A673 (cell line): ENCODE measurements at regions of chr1 and their contacts with region 1.

Region 1: GRCh38 chr1:182789138-182790076 is at the start of gene NPL:
- DNase-seq: peak; percentile 85
- H3K4me3 ChIP-seq: peak within 1 kb of the TSS; percentile 53
- H3K27ac ChIP-seq: no peak within 1 kb of the TSS
- H3K4me1 ChIP-seq: peaks cover 11% of the 10 kb centered on the region
- H3K27me3 ChIP-seq: peaks cover 10% of the 10 kb centered on the region
- CTCF ChIP-seq: no peak
- total RNA-seq, gene NPL: 5.3 and 6.9 TPM in 2 replicates

Region 2: DNA sequence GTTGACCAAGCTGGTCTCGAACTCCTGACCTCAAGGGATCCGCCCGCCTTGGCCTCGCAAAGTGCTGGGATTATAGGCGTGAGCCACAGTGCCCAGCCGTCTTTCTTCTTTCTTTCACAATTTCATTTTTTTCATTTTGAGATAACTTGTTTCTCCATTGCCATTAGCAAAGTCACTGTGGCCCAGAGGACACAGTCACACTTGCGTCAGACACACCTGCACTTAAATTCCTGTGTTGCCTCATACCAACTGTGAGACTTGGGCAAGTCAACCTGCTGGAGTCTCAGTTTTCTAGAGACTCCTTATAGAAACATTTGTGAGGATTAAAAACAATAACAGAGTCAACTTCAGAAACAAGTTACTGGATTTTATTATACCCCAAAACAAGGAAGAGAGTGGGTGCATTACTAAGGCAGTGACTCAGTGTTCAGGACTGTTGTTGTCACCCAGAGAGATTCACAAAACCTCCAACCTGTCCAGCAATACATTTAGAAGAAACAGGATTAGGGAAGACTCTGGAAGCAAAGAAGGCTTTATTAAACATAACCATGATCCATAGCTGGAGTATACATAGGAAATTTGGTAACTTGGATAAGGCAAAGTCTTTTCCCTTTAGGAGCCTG is 391.5 kb before region 1 on chr1:
- CTCF ChIA-PET with region 1: no interaction called
- POLR2A ChIA-PET with region 1: no interaction called
- intact Hi-C with region 1: loop called (anchors 5 kb)
- DNase-seq: no peak
- H3K4me3 ChIP-seq: no peak overlapping the region
- H3K27ac ChIP-seq: no peak overlapping the region
- H3K4me1 ChIP-seq: peaks cover 6% of the 10 kb centered on the region
- H3K27me3 ChIP-seq: no peaks in the 10 kb centered on the region
- CTCF ChIP-seq: no peak

Region 3: DNA sequence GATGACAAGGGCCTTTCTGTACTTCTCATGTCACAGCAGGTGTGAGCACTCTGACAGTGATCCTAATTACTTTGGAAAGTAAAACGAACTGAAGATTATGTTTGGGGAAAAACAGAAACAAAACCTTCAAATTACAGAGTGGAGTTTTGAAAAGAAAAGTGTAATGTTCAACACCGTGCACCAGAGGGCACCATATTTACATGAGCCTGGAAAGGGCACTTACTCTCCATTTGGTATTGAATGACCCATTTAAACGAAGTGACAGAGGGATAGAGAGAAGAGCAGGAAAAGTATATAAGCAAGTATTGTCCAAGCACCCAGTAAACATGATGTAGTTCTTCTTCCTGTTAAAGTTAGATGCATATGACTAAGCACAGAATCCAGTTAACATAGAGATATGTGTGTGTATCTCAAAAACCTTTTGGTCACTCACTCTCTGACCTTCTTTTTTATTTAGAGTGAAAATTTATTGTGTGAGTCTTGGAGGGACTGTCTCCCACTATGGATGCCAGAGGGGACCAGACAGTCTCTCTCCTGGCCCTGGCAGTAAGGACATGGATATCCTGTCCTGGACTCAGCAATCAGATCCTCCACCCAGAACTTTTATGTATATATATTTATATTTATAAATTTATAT is 343.3 kb before region 1 on chr1:
- CTCF ChIA-PET with region 1: interaction called, 3 read pairs
- POLR2A ChIA-PET with region 1: no interaction called
- intact Hi-C with region 1: loop called (anchors 1 kb)
- DNase-seq: peak; percentile 65
- H3K4me3 ChIP-seq: no peak overlapping the region
- H3K27ac ChIP-seq: no peak overlapping the region
- H3K4me1 ChIP-seq: no peaks in the 10 kb centered on the region
- H3K27me3 ChIP-seq: no peaks in the 10 kb centered on the region
- CTCF ChIP-seq: peak; percentile 79

Region 4: DNA sequence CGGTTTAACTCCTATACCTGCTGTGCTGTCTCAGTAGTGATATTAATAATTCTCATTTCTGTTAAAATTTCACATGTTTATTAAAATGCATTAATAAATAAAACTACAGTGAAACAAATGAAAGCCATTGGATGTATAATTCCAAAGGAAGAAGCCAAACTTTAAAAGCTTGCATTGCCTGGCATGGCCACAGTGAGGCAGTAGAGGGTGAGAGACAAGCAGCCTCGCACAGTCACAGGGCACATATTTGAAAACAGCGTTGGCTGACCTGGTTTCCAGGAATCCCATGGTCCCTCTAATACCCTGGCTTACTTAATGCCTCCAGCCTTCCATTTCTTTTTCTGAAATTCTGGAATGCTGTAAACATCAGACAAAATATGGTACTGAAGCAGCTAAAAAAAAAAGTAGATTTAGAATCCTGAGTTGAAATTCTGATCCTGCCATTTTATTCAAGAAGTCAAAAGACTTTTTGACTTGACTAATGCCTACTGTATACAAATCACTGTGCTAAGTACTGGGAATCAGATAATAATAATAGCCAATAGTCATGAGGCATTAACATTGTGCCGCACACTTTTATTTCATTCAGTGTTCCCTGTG is 193.7 kb before region 1 on chr1:
- CTCF ChIA-PET with region 1: interaction called, 69 read pairs
- POLR2A ChIA-PET with region 1: no interaction called
- intact Hi-C with region 1: no loop called
- DNase-seq: peak; percentile 76
- H3K4me3 ChIP-seq: no peak overlapping the region
- H3K27ac ChIP-seq: no peak overlapping the region
- H3K4me1 ChIP-seq: peaks cover 5% of the 10 kb centered on the region
- H3K27me3 ChIP-seq: no peaks in the 10 kb centered on the region
- CTCF ChIP-seq: peak; percentile 94

Region 5: DNA sequence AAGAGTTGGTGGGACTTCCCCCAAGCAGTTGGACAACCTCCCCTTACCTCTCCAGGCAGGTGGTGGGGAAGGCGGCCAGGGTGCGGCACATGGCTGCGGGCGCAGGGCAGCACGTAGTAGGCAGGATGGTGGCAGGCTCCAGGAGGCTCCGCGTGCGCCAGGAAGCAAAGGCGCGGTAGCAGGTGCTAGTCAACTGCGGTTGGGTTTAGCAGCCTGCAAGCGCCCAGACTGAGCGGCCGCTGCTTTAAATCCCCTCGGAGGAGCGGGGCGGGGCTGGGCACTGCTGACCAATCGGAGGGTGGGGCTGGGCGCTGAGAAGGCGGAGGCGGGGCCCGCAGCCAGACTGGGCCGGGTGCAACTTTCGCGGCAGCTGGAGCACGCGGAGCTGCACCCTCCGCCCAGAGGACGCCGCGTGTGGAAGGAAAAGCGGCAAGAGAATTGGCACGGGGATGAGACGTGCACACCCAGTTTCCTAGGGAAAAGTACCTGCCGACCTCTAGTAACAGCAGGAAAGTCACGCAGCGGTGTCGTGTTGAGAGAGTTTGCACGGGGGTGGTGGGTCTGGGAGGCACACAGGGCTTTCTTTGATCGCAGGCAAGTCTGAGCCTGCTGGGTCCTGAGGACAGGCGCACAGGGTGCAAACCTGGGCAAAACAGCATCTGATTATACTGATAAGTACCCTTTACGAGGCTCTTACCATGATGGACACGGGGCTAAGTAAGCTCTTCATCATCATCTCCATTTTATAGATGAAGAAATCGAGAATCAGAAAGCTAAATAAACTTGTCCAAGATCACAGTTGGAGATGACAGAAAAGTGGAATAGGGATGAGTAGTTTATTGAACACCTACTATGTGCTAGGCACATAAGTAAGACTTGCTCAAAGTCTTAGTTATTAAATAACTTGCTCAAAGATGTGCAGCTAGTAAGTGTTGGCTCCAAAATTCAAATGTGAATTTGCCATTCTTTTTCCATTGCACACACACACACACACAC is 184.9 kb before region 1 on chr1 and contains the start of gene RGS16:
- CTCF ChIA-PET with region 1: interaction called, 19 read pairs
- POLR2A ChIA-PET with region 1: interaction called, 4 read pairs
- intact Hi-C with region 1: no loop called
- DNase-seq: peak; percentile 96
- H3K4me3 ChIP-seq: peak within 1 kb of the TSS; percentile 65
- H3K27ac ChIP-seq: peak within 1 kb of the TSS; percentile 39
- H3K4me1 ChIP-seq: peaks cover 48% of the 10 kb centered on the region
- H3K27me3 ChIP-seq: no peaks in the 10 kb centered on the region
- CTCF ChIP-seq: no peak
- total RNA-seq, gene RGS16: 22.1 and 23.1 TPM in 2 replicates

Region 6: GRCh38 chr1:182662121-182662890 is 127.1 kb before region 1 on chr1:
- CTCF ChIA-PET with region 1: interaction called, 6 read pairs
- POLR2A ChIA-PET with region 1: interaction called, 10 read pairs
- intact Hi-C with region 1: no loop called
- DNase-seq: no peak
- H3K4me3 ChIP-seq: no peak overlapping the region
- H3K27ac ChIP-seq: no peak overlapping the region
- H3K4me1 ChIP-seq: no peaks in the 10 kb centered on the region
- H3K27me3 ChIP-seq: no peaks in the 10 kb centered on the region
- CTCF ChIP-seq: no peak

Region 7: DNA sequence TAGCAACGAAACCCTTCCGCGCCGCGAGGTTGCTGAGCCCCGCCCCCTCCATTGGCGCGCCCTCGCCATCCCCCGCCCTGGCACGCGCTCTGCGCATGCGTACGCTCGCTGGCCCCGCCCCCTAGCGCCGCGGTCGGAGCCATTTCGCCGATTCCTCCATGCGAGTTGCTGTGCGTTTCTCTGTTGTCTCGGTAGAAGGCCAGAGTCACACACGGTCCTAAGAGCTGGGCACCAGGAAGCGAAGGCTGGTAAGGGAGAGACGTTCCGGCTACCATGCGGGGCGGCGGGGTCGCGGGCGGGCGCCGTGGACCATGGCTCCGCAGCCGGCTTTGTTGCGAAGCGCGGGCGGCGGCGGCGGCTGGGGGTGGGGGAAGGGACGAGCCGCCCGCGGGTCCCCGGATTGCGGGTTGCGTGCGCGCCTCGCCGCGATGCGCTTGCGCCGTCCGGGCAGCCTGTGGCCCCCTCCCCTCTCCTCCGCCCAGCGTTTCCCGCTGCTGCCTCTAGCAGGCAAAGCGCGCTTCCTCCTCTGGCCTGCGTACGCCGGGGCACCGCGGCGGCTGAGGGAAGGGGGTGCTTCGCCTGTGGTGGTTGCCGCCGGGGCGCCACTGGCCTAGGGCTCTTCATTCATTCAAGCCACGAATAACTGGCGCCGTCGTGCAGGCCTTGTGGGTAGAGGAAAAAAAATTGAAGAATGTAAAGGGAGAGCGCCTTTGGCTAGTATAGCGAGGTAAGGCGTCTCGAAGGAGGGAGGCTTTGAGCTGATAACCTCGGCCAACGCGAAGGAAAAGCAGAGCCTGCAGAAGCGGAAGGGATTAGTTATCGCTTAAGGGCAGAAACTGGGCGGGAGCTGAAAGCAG is 50.0 kb after region 1 on chr1 and contains the start of gene DHX9:
- CTCF ChIA-PET with region 1: no interaction called
- POLR2A ChIA-PET with region 1: interaction called, 13 read pairs
- intact Hi-C with region 1: no loop called
- DNase-seq: peak; percentile 96
- H3K4me3 ChIP-seq: peak within 1 kb of the TSS; percentile 79
- H3K27ac ChIP-seq: peak within 1 kb of the TSS; percentile 98
- H3K4me1 ChIP-seq: peaks cover 17% of the 10 kb centered on the region
- H3K27me3 ChIP-seq: no peaks in the 10 kb centered on the region
- CTCF ChIP-seq: peak; percentile 32
- total RNA-seq, gene DHX9: 374 and 384 TPM in 2 replicates

Region 8: DNA sequence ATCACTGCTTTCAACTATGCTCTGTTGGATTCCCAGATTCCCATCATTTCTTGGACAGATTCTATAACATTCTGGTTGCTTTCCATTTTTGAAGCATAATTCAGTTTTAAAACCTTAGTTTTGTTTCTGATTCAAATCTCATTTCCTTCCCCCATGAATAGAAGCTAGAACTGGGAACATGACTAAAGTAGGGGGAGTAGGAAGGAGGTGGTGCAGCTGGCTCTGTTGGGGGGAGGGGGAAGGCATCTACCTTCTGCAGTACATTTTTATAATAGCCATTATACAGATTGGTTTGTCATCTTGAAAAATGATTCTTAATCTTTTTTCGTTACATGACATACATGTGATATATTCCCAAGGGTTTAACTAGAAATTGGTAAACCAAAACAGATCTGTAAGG is 731.0 kb after region 1 on chr1:
- CTCF ChIA-PET with region 1: no interaction called
- POLR2A ChIA-PET with region 1: no interaction called
- intact Hi-C with region 1: no loop called
- DNase-seq: no peak
- H3K4me3 ChIP-seq: no peak overlapping the region
- H3K27ac ChIP-seq: no peak overlapping the region
- H3K4me1 ChIP-seq: no peaks in the 10 kb centered on the region
- H3K27me3 ChIP-seq: no peaks in the 10 kb centered on the region
- CTCF ChIP-seq: no peak

Region 9: GRCh38 chr1:184276416-184276815 is 1487.0 kb after region 1 on chr1:
- CTCF ChIA-PET with region 1: no interaction called
- POLR2A ChIA-PET with region 1: no interaction called
- intact Hi-C with region 1: no loop called
- DNase-seq: no peak
- H3K4me3 ChIP-seq: no peak overlapping the region
- H3K27ac ChIP-seq: no peak overlapping the region
- H3K4me1 ChIP-seq: no peaks in the 10 kb centered on the region
- H3K27me3 ChIP-seq: no peaks in the 10 kb centered on the region
- CTCF ChIP-seq: no peak